ENCODE measurements at regions of chr2 and their contacts with region 1.

Region 1: GRCh38 chr2:109510136-109511028 is 103.4 kb downstream of the SEPTIN10 start:
- DNase-seq: peak; percentile 87
- H3K4me3 Mint-ChIP-seq: no peak overlapping the region
- H3K27ac Mint-ChIP-seq: no peak overlapping the region
- H3K4me1 Mint-ChIP-seq: peaks cover 17% of the 10 kb centered on the region
- H3K27me3 Mint-ChIP-seq: no peaks in the 10 kb centered on the region
- CTCF ChIP-seq: peak; percentile 89

Region 2: DNA sequence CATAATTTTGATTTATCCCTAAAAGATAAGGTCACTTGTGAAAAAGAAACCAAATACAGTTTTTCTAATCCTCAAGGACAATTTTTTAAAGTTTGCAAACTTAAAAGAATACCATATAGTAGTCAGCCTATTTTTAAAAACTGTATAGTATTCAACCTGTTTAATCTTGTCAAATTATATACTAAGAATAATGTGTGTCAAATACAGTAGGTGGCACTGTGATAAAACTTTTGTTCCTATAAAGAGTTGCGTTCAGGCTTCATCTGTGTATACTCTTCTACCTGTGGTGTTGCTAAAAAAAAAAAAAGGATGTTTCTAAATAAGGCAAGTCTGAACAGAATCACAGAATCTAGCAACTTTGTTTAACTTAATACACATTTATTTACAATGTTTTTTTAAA is 655.2 kb before region 1 on chr2:
- CTCF ChIA-PET with region 1: interaction called, 7 read pairs
- POLR2A ChIA-PET with region 1: no interaction called
- intact Hi-C with region 1: loop called (anchors 1 kb)
- DNase-seq: peak; percentile 42
- H3K4me3 Mint-ChIP-seq: no peak overlapping the region
- H3K27ac Mint-ChIP-seq: no peak overlapping the region
- H3K4me1 Mint-ChIP-seq: no peaks in the 10 kb centered on the region
- H3K27me3 Mint-ChIP-seq: no peaks in the 10 kb centered on the region
- CTCF ChIP-seq: peak; percentile 30

Region 3: GRCh38 chr2:109260886-109261700 is 249.3 kb before region 1 on chr2:
- CTCF ChIA-PET with region 1: interaction called, 3 read pairs
- POLR2A ChIA-PET with region 1: no interaction called
- intact Hi-C with region 1: loop called (anchors 10 kb)
- DNase-seq: peak; percentile 47
- H3K4me3 Mint-ChIP-seq: no peak overlapping the region
- H3K27ac Mint-ChIP-seq: no peak overlapping the region
- H3K4me1 Mint-ChIP-seq: peaks cover 33% of the 10 kb centered on the region
- H3K27me3 Mint-ChIP-seq: no peaks in the 10 kb centered on the region
- CTCF ChIP-seq: peak; percentile 28

Region 4: DNA sequence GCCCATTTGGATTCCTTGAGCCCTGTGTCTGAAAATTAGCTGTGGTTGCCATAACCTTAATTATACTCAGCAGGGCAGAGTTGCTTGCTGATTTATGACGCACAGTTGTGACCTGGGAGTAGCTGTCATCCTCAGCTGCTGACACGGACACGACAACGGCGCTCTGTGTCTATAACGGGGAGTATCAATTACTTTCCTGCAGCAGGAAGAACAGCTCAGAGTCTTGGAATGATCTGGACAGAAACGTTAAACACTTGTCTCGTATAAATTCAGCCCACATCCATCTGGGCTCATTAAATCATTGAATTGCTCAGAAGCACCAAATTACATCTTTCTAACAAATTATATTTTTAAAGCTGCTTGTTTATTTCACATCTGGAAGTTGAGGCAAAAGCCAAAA is 12.9 kb before region 1 on chr2:
- CTCF ChIA-PET with region 1: interaction called, 34 read pairs
- POLR2A ChIA-PET with region 1: no interaction called
- intact Hi-C with region 1: no loop called
- DNase-seq: no peak
- H3K4me3 Mint-ChIP-seq: no peak overlapping the region
- H3K27ac Mint-ChIP-seq: no peak overlapping the region
- H3K4me1 Mint-ChIP-seq: no peaks in the 10 kb centered on the region
- H3K27me3 Mint-ChIP-seq: no peaks in the 10 kb centered on the region
- CTCF ChIP-seq: no peak